ENCODE measurements at regions of chr17 and their contacts with region 1.

Region 1: GRCh38 chr17:1673041-1673785 is 11.5 kb downstream of the PRPF8 start:
- DNase-seq: no peak
- H3K4me3 Mint-ChIP-seq: no peak overlapping the region
- H3K27ac Mint-ChIP-seq: no peak overlapping the region
- H3K4me1 Mint-ChIP-seq: peaks cover 5% of the 10 kb centered on the region
- H3K27me3 Mint-ChIP-seq: no peaks in the 10 kb centered on the region

Region 2: DNA sequence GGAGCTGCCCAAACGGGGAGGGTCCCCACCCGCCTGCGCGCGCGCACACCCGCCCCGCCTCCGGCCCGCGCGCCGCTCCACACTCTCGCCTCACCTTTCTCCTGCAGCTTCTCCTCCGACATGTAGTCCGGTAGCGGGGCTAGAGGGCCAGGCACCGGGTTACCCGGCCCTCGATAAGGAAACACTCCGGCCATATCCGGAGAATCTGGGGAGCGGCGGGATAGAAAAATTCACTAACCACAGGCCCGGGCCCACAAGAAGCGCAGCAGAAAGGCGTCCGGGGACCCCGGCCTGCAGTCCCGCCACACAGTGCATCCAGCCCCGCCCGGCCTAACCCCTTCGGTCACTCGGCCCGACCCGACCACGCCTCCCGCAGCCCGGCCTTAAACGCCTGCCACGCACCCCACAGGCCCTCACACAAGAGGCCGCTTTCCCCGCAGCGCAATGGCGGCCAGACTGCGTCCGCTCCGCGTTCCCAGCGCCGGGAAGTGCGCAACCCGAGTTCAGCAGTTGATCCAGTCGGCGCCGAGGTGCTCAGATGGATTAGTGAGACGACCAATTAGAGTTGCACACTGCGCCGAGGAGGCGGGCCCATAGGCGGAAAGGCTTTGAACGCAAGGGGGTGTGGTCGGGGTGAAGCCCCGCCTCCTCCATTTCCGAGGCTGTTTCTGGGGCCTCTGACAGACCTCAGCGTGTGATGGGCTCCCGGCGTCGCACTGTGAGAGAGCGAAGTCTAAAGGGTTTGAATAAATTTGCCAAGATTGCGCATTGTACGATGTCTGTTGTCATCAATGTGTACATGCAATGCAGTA is 11.4 kb after region 1 on chr17 and contains the start of gene PRPF8:
- CTCF ChIA-PET with region 1: interaction called, 15 read pairs
- DNase-seq: peak; percentile 99
- H3K4me3 Mint-ChIP-seq: peak within 1 kb of the TSS; percentile 99
- H3K27ac Mint-ChIP-seq: peak within 1 kb of the TSS; percentile 96
- H3K4me1 Mint-ChIP-seq: peaks cover 37% of the 10 kb centered on the region
- H3K27me3 Mint-ChIP-seq: peaks cover 4% of the 10 kb centered on the region

Measured in activated naive CD4-positive, alpha-beta T cell treated with anti-CD3 and anti-CD28 coated beads, Interleukin-2, amount 10 ng/mL, durations not matched to agents 7 days and 5 days (primary cell).